Motor neuron (in vitro differentiated cells): ENCODE measurements at regions of chr17 and their contacts with region 1.

Region 1: GRCh38 chr17:12180644-12181261 is 160.1 kb downstream of the MAP2K4 start:
- ATAC-seq: peak in 6 of 8 experiments; percentile 31 to 70 (median 60)
- H3K4me3 ChIP-seq: no peak overlapping the region
- H3K27ac ChIP-seq: no peak overlapping the region
- H3K4me1 ChIP-seq: no peaks in the 10 kb centered on the region

Region 2: DNA sequence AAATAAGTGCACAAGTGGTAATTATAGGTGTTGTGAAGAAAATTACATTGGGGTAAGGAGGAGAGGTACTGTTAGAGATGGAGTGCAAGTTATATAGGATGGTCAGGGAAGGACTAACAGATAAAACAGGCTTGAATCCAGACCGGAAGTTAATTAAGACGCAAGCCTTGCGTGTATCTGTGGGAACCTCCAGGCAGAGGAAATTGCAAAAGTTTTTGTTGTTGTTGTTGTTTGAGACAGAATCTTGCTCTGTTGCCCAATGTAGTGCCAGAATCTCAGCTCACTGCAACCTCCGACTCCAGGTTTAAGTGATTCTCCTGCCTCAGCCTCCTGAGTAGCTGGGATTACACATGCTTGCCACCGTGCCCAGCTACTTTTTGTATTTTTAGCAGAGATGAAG is 181.0 kb before region 1 on chr17:
- in situ Hi-C with region 1: no loop called
- ATAC-seq: no peak
- H3K4me3 ChIP-seq: no peak overlapping the region
- H3K27ac ChIP-seq: no peak overlapping the region
- H3K4me1 ChIP-seq: peaks cover 4% of the 10 kb centered on the region in 2 donors

Region 3: DNA sequence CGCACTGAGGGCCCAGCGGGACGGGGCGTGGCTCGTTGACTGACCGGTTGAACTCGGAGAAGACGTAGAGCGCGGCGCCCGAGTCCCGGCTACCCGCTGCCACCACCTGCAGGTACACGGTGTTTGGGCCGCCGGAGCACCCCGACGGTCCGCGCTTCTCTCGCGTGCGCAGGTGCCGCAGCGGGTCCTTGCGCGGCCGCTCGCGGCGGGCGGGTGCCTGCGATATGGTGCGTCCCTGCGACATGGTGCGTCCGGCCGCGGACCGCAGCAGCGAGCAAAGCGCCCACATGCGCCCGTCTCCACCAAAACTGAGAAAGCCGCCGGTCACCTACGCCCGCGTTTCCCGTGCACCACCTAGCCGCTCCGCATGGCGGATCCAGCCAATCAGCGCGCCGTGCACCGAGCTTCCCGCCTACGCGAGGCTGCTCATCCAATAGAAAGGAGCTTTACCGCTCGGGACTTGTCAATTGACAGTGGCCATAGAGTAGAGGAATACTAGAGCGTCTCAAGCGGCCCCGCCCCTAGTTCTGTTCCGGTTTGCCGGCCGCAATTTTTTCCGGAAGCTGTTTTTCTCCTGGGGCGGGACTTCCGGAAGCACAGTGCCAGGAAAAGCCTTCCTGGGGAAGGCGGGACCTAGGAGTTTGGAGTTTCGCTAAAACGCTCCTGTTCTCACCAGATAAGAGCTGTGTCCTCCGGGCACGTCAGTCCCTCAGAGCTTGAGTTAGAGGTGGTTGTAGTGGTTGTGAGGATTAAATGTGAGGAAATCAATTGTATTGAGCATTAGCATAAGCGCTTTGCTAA is 837.1 kb after region 1 on chr17 and contains the start of gene ELAC2:
- in situ Hi-C with region 1: loop called in 2 of 9 experiments (anchors 25 kb)
- ATAC-seq: peak; percentile 95 to 99 (median 98)
- H3K4me3 ChIP-seq: peak within 1 kb of the TSS; percentile 60 to 93 (median 77)
- H3K27ac ChIP-seq: peak within 1 kb of the TSS; percentile 53 to 75
- H3K4me1 ChIP-seq: peaks cover 0 to 7% of the 10 kb centered on the region in 2 donors
- total RNA-seq, gene ELAC2: 20.1 to 103 (median 39.9) TPM